ENCODE measurements at regions of chr1 and their contacts with region 1.

Region 1: GRCh38 chr1:44819608-44820327 is 11.4 kb downstream of the BTBD19 start:
- DNase-seq: peak; percentile 79 to 91
- H3K4me3 ChIP-seq: peak overlapping the region; percentile 40 to 64 (median 47)
- H3K27ac ChIP-seq: peak overlapping the region; percentile 100
- H3K4me1 ChIP-seq: peaks cover 2 to 5% (median 3%) of the 10 kb centered on the region in 4 experiments; a peak in 5 of 7 replicates
- H3K27me3 ChIP-seq: no peaks in the 10 kb centered on the region; a peak in 2 of 7 replicates
- CTCF ChIP-seq: 0 out of 4 replicates have a peak, but pooled peaks of 1 of the 3 experiments have one; percentile 5
- EP300 ChIP-seq: peak in 1 of 2 experiments; percentile 79; a peak in 1 of 3 replicates
- POLR2A ChIP-seq: peak; percentile 99 to 100
- RAD21 ChIP-seq: peak in 1 of 2 experiments; percentile 15; a peak in 3 of 4 replicates

Region 2: DNA sequence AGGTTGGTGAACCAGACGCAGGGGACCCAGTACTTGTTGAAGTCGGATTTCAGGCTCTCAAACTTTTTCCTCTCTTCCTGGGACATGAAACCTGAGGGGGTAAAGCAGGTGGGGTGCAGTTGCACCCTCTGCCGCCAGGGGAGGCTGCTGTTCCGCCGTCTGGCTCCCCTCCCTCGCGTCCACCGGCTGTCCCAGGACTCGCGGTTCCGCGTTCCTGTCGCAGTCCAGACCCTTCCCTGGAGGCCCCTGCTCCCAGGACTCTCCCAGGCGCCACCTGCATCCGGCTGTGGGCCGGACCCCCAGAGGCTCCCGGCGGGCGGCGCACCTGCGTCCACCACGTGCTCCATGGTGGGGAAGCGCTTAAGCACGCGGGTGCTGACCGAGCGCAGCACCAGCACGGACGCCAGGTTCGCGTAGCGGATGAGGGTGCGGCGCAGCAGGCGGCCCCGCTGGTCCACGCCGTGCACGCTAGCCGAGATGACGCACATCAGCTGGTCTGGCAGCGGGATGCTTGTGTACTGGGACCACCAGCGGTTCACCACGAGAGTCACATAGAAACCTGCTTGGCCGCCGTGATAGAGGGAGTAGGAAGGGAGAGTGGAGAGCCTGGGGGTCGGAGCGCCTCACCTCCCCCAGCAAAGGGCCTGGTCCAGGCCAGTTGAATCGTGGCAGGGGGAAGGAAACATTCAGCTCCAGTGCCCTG is 33.5 kb before region 1 on chr1:
- CTCF ChIA-PET with region 1: interaction called, 51 read pairs
- POLR2A ChIA-PET with region 1: interaction called, 147 read pairs
- DNase-seq: peak in 1 of 2 experiments; percentile 94
- H3K4me3 ChIP-seq: peak overlapping the region; percentile 17 to 58 (median 46)
- H3K27ac ChIP-seq: no peak overlapping the region
- H3K4me1 ChIP-seq: peaks cover 4 to 18% (median 14%) of the 10 kb centered on the region in 4 experiments
- H3K27me3 ChIP-seq: peaks cover 0 to 7% (median 2%) of the 10 kb centered on the region in 4 experiments; a peak in 3 of 7 replicates
- CTCF ChIP-seq: peak; percentile 80 to 100 (median 100)
- EP300 ChIP-seq: peak in 1 of 2 experiments; percentile 98; a peak in 1 of 3 replicates
- POLR2A ChIP-seq: peak in 1 of 2 experiments; percentile 50; a peak in 1 of 3 replicates
- RAD21 ChIP-seq: peak; percentile 83 to 84

Region 3: DNA sequence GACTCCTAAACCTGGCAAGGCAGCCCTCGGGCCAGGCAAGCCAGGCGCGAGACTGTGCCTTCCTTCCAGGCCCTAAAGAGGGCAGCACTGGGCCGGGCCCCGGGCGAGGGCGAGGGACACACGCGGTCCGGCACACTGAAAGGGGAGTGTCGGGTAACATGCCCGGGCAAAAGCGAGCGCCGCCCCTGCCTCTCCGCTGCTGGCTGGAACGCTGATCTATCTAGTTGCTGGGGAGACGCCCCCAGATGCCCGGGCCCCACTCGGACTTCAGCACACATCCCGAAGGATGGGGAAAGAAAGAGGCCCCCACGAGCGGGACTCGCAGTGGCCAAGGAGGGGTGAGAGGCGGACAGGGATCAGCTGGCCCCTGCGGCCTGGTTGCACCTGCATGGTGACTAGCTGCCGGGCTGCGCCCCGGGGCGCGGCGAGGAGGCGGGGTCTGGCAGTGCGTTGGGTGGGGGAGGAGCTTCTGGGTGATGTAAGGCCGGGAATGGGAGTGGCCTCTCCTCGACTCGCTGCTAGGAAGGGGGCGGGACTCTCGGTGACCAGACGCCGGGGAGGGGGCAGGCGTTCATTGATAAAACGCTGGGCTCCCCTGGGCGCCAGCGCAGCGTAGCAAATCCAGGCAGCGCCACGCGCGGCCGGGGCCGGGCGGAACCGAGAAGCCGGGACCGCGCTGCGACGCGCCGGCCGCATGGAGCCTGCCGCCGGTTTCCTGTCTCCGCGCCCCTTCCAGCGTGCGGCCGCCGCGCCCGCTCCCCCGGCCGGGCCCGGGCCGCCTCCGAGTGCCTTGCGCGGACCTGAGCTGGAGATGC is 19.8 kb before region 1 on chr1 and contains the start of gene PLK3:
- CTCF ChIA-PET with region 1: interaction called, 31 read pairs
- POLR2A ChIA-PET with region 1: interaction called, 547 read pairs
- DNase-seq: peak; percentile 93 to 98
- H3K4me3 ChIP-seq: peak within 1 kb of the TSS; percentile 60 to 76 (median 66)
- H3K27ac ChIP-seq: peak within 1 kb of the TSS; percentile 91
- H3K4me1 ChIP-seq: peaks cover 0 to 5% (median 2%) of the 10 kb centered on the region in 4 experiments; a peak in 3 of 7 replicates
- H3K27me3 ChIP-seq: peaks cover 0 to 5% (median 0%) of the 10 kb centered on the region in 4 experiments; a peak in 2 of 7 replicates
- CTCF ChIP-seq: peak in 2 of 3 experiments; percentile 89 to 97; a peak in 3 of 4 replicates
- EP300 ChIP-seq: no peak
- POLR2A ChIP-seq: peak in 1 of 2 experiments; percentile 98; a peak in 2 of 3 replicates
- RAD21 ChIP-seq: peak; percentile 71 to 79
- total RNA-seq, gene PLK3: 7.9 and 9.7 TPM in 2 replicates

Region 4: GRCh38 chr1:44835738-44836675 is 16.2 kb after region 1 on chr1:
- CTCF ChIA-PET with region 1: interaction called, 26 read pairs
- POLR2A ChIA-PET with region 1: interaction called, 128 read pairs
- DNase-seq: peak; percentile 69 to 95
- H3K4me3 ChIP-seq: no peak overlapping the region
- H3K27ac ChIP-seq: no peak overlapping the region
- H3K4me1 ChIP-seq: peaks cover 0 to 4% (median 1%) of the 10 kb centered on the region in 4 experiments; a peak in 4 of 7 replicates
- H3K27me3 ChIP-seq: no peaks in the 10 kb centered on the region
- CTCF ChIP-seq: peak; percentile 82 to 97 (median 94)
- EP300 ChIP-seq: no peak
- POLR2A ChIP-seq: no peak
- RAD21 ChIP-seq: peak; percentile 89 to 92

Region 5: GRCh38 chr1:44890007-44890406 is 70.2 kb after region 1 on chr1:
- CTCF ChIA-PET with region 1: no interaction called
- POLR2A ChIA-PET with region 1: no interaction called
- DNase-seq: no peak
- H3K4me3 ChIP-seq: no peak overlapping the region
- H3K27ac ChIP-seq: no peak overlapping the region
- H3K4me1 ChIP-seq: peaks cover 0 to under 1% (median 0%) of the 10 kb centered on the region in 4 experiments; a peak in 1 of 7 replicates
- H3K27me3 ChIP-seq: no peaks in the 10 kb centered on the region
- CTCF ChIP-seq: no peak
- EP300 ChIP-seq: no peak
- POLR2A ChIP-seq: no peak
- RAD21 ChIP-seq: no peak

Region 6: GRCh38 chr1:44924835-44925513 is 105.2 kb after region 1 on chr1:
- CTCF ChIA-PET with region 1: no interaction called
- POLR2A ChIA-PET with region 1: no interaction called
- DNase-seq: no peak
- H3K4me3 ChIP-seq: no peak overlapping the region
- H3K27ac ChIP-seq: no peak overlapping the region
- H3K4me1 ChIP-seq: no peaks in the 10 kb centered on the region
- H3K27me3 ChIP-seq: no peaks in the 10 kb centered on the region
- CTCF ChIP-seq: peak in 2 of 3 experiments; percentile 26 to 50; a peak in 2 of 4 replicates
- EP300 ChIP-seq: no peak
- POLR2A ChIP-seq: no peak
- RAD21 ChIP-seq: peak; percentile 12 to 32; a peak in 2 of 4 replicates

Region 7: DNA sequence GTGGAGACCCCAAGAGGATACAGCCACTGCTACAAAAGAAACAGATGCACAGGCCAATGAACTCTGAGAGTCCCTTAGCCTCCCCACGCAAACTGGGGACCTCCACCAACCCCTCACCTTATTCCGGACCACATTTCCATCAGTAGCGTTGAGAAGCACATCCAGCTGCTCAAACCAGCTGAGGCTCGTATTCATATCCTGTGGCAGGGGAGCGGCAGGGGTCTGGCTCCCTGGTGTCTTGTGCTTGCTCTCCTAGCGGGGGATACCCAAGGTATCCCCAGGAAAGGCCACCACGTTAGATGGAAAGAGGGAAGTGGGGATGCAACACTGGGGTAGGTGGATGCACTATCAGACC is 679.6 kb after region 1 on chr1:
- CTCF ChIA-PET with region 1: no interaction called
- POLR2A ChIA-PET with region 1: interaction called, 12 read pairs
- DNase-seq: no peak
- H3K4me3 ChIP-seq: peak overlapping the region; percentile 65 to 86 (median 72)
- H3K27ac ChIP-seq: no peak overlapping the region
- H3K4me1 ChIP-seq: peaks cover 0 to 10% (median 3%) of the 10 kb centered on the region in 4 experiments; a peak in 6 of 7 replicates
- H3K27me3 ChIP-seq: no peaks in the 10 kb centered on the region
- CTCF ChIP-seq: no peak
- EP300 ChIP-seq: no peak
- POLR2A ChIP-seq: no peak
- RAD21 ChIP-seq: no peak